ENCODE measurements at regions of chr22 and their contacts with region 1.

Region 1: DNA sequence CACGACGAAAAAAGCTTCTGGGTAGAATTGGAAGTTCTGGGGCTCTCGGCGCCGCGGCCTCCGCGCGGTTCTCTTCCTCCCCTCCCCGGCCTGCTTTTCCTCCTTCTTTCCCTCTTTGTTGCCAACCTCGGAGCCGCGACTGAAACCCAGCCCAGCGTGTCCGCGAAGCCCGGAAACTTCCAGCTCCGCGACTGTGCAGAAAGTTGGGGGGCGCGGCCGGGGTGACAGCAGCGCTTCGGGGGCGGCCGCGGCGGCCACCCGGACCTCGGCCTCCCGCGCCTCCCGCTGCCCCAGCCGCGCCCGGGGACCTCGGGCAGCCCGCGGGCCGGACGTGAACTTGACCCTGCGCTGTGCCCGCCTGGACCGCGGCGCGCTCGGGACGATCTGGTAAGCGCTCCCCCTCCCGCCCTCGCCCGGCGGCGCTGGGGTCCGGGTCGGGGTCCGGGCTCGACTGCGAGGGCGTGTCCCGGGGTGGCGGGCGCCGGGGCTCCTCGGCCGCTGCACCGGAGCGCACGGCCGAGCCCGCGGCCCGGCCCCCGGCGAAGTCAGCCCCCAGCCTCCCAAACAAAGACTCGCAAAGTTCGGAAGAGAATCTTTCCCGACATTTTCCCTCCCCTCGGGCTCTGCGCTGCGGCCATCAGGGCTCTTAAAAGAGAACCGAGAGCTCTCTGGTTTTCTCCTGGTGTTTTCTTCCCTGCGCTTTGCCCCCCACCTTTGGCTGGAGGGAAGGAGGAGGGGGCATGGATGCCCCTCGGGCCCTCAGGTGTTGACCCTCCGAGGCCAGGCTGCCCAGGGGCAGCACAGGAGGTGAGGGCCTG is 67.9 kb upstream of the WNT7B start:
- DNase-seq: peak; percentile 48
- H3K4me3 Mint-ChIP-seq: peak overlapping the region; percentile 77
- H3K27ac Mint-ChIP-seq: peak overlapping the region; percentile 40
- H3K4me1 Mint-ChIP-seq: peaks cover 18% of the 10 kb centered on the region
- H3K27me3 Mint-ChIP-seq: peaks cover 1% of the 10 kb centered on the region

Region 2: DNA sequence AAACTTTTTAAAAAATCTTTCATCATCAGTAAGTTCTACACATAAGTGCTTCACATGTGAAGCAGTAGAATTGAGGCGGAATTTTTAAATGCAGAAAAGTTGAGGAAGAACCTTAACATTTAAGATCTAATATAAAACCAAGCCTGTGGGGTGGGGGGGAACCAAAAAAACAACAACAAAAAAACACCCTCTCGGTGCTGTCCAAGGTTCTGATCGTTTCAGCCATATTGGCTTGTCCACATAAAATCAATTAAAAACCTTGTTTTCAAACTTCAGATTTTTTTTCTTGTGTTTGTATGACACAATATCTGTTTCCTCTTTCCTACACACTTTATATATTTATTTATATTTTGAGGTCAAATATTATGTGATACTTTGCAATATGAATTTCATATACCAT is 197.9 kb before region 1 on chr22:
- CTCF ChIA-PET with region 1: no interaction called
- POLR2A ChIA-PET with region 1: no interaction called
- DNase-seq: no peak
- H3K4me3 Mint-ChIP-seq: no peak overlapping the region
- H3K27ac Mint-ChIP-seq: no peak overlapping the region
- H3K4me1 Mint-ChIP-seq: peaks cover 4% of the 10 kb centered on the region
- H3K27me3 Mint-ChIP-seq: no peaks in the 10 kb centered on the region

Region 3: GRCh38 chr22:46027192-46028105 is 17.4 kb before region 1 on chr22:
- CTCF ChIA-PET with region 1: no interaction called
- POLR2A ChIA-PET with region 1: no interaction called
- DNase-seq: no peak
- H3K4me3 Mint-ChIP-seq: no peak overlapping the region
- H3K27ac Mint-ChIP-seq: no peak overlapping the region
- H3K4me1 Mint-ChIP-seq: peaks cover 4% of the 10 kb centered on the region
- H3K27me3 Mint-ChIP-seq: peaks cover 39% of the 10 kb centered on the region

Region 4: GRCh38 chr22:46057762-46058420 is 13.1 kb after region 1 on chr22:
- CTCF ChIA-PET with region 1: interaction called, 3 read pairs
- POLR2A ChIA-PET with region 1: interaction called, 27 read pairs
- DNase-seq: peak; percentile 60
- H3K4me3 Mint-ChIP-seq: peak overlapping the region; percentile 53
- H3K27ac Mint-ChIP-seq: peak overlapping the region; percentile 90
- H3K4me1 Mint-ChIP-seq: peaks cover 40% of the 10 kb centered on the region
- H3K27me3 Mint-ChIP-seq: peaks cover 2% of the 10 kb centered on the region

Region 5: GRCh38 chr22:46079861-46080821 is 35.3 kb after region 1 on chr22:
- CTCF ChIA-PET with region 1: no interaction called
- POLR2A ChIA-PET with region 1: no interaction called
- DNase-seq: no peak
- H3K4me3 Mint-ChIP-seq: no peak overlapping the region
- H3K27ac Mint-ChIP-seq: no peak overlapping the region
- H3K4me1 Mint-ChIP-seq: peaks cover 17% of the 10 kb centered on the region
- H3K27me3 Mint-ChIP-seq: no peaks in the 10 kb centered on the region

Measured in activated CD4-positive, alpha-beta memory T cell treated with anti-CD3 and anti-CD28 coated beads, Interleukin-2, amount 10 ng/mL, durations not matched to agents 7 days and 5 days (primary cell).